Activated naive CD4-positive, alpha-beta T cell treated with anti-CD3 and anti-CD28 coated beads for 36 hours (primary cell): ENCODE measurements at regions of chrX and their contacts with region 1.

Region 1: DNA sequence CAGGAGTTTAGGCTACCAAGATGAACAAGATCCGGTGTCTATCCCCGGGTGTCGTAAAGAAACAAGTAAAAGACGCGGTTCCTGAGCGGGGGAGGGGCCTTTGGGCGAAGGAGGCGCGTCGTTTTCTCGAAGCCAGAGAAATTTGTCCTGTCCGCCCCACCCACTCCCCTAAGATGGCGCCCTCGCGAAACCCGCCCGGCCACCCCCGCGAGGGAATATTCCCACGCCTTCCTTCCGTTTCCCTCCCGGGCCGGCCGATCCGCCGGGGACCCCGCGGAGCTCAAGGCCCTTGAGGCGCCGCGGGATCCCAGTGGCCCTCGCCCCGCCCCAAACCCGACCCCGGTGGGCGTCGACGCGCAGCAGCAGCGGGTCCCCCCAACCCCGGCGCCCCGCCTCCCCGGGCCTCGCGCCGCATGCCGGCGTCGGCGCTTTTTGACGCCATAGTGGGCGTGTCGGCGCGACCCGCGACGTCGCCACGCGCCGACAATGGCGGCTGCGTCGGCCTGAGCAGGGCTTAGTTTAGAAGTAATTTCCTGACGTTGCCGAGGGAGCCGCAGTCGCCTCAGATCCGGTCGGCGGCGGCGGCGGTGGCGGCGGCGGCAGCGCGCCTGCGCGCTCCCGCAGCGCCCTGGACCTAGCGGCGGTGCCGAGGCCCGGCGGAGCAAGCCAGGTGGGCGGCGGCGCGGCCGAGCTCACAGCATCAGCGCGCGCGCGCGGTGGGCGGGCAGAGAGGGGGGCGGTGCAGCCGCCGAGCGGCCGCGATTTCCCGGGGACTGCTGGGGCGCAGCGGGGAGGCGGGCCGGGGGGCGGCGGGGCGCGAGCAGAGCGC is at the start of gene HTATSF1:
- DNase-seq: peak; percentile 93
- H3K4me3 Mint-ChIP-seq: peak within 1 kb of the TSS; percentile 90
- H3K27ac Mint-ChIP-seq: peak within 1 kb of the TSS; percentile 94
- H3K4me1 Mint-ChIP-seq: peaks cover 18% of the 10 kb centered on the region
- H3K27me3 Mint-ChIP-seq: no peaks in the 10 kb centered on the region
- total RNA-seq, gene HTATSF1: 38.9 to 40.4 TPM

Region 2: DNA sequence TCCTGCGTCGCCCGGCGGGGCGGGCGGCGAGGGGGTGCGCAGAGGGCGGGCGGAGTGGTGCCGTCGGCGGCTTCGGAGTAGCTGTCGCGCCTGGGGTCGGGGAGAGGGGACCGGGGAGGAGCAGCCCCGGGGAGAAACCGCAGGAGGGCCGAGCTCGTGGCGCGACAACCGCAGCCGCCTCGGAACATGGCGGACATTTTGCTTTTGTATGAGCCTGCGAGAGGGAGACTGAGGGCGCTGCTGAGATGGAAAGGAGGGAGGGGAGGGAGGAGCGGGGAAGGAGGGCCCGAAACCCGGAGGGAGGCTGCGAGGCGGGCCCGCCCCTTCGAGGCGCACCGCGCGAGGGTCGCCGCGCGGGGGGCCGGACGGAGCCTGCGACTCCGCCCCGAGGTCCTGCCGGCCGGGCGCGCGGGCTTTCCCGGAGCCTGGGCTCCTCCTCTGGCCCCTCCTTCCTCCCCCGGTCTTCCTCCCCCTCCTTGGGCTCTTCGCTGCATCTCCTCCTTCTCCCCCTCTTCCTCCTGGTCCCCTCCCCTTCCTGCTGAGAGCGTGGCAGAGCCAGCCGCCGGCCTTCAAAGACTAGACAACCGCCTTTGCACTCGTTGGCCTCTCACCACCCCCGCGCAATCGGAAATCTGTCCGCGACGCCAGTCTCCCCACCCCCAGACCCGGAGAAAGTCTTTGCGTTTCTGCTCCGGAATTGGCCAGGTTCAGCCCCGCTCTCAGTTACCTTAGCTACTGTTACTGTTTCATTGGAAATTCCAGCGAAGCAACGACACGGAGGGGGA is 975.4 kb before region 1 on chrX:
- CTCF ChIA-PET with region 1: no interaction called
- intact Hi-C with region 1: loop called (anchors 2 kb)
- DNase-seq: peak; percentile 91
- H3K4me3 Mint-ChIP-seq: peak overlapping the region; percentile 97
- H3K27ac Mint-ChIP-seq: peak overlapping the region; percentile 97
- H3K4me1 Mint-ChIP-seq: peaks cover 38% of the 10 kb centered on the region
- H3K27me3 Mint-ChIP-seq: no peaks in the 10 kb centered on the region

Region 3: GRCh38 chrX:136147315-136147901 is 349.6 kb before region 1 on chrX and contains the start of gene FHL1:
- CTCF ChIA-PET with region 1: no interaction called
- intact Hi-C with region 1: loop called (anchors 2 kb)
- DNase-seq: peak; percentile 54
- H3K4me3 Mint-ChIP-seq: peak within 1 kb of the TSS; percentile 74
- H3K27ac Mint-ChIP-seq: peak within 1 kb of the TSS; percentile 32
- H3K4me1 Mint-ChIP-seq: peaks cover 26% of the 10 kb centered on the region
- H3K27me3 Mint-ChIP-seq: no peaks in the 10 kb centered on the region
- total RNA-seq, gene FHL1: 17.7 to 20.5 TPM

Region 4: GRCh38 chrX:136450050-136450830 is 46.7 kb before region 1 on chrX:
- CTCF ChIA-PET with region 1: no interaction called
- intact Hi-C with region 1: no loop called
- DNase-seq: no peak
- H3K4me3 Mint-ChIP-seq: no peak overlapping the region
- H3K27ac Mint-ChIP-seq: no peak overlapping the region
- H3K4me1 Mint-ChIP-seq: no peaks in the 10 kb centered on the region
- H3K27me3 Mint-ChIP-seq: no peaks in the 10 kb centered on the region

Region 5: DNA sequence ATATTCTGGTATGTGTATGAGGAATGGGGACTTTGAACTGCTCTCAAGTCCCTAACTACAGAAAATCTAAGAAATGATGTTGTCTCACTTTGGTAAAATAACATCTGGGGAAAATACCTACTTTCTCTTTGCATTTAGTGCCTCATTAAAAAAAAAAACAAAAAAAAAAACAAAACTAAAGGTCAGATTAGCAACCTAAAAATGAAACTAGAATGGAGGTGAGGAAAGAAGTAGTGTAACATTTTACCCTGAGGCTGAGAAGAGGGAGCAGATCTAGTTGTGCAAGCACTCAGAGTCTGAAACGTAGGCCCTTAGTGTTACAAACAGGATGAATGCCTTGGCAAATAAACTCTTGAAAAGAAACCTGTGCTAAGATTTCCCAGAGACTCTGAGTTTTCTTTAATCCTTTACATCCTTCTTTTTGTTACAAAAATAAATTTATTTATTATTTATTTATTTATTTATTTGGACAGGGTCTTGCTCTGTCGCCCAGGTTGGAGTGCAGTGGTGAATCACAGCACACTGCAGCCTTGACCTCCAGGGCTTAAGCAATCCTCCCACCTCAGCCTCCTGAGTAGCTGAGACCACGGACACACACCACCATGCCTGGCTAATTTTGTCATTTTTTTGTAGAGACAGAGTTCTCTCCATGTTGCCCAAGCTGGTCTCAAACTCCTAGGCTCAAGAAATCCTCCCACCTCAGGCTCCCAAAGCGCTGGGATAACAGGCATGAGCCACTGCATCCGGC is 91.2 kb after region 1 on chrX:
- CTCF ChIA-PET with region 1: no interaction called
- intact Hi-C with region 1: loop called (anchors 2 kb)
- DNase-seq: peak; percentile 37
- H3K4me3 Mint-ChIP-seq: no peak overlapping the region
- H3K27ac Mint-ChIP-seq: peak overlapping the region; percentile 86
- H3K4me1 Mint-ChIP-seq: peaks cover 63% of the 10 kb centered on the region
- H3K27me3 Mint-ChIP-seq: no peaks in the 10 kb centered on the region

Region 6: GRCh38 chrX:136711147-136711546 is 214.2 kb after region 1 on chrX:
- CTCF ChIA-PET with region 1: no interaction called
- intact Hi-C with region 1: loop called (anchors 5 kb)
- DNase-seq: peak; percentile 56
- H3K4me3 Mint-ChIP-seq: no peak overlapping the region
- H3K27ac Mint-ChIP-seq: peak overlapping the region; percentile 95
- H3K4me1 Mint-ChIP-seq: peaks cover 74% of the 10 kb centered on the region
- H3K27me3 Mint-ChIP-seq: no peaks in the 10 kb centered on the region

Region 7: GRCh38 chrX:136909706-136910564 is 413.0 kb after region 1 on chrX:
- CTCF ChIA-PET with region 1: no interaction called
- intact Hi-C with region 1: loop called (anchors 1 kb)
- DNase-seq: peak; percentile 75
- H3K4me3 Mint-ChIP-seq: peak overlapping the region; percentile 89
- H3K27ac Mint-ChIP-seq: peak overlapping the region; percentile 87
- H3K4me1 Mint-ChIP-seq: peaks cover 15% of the 10 kb centered on the region
- H3K27me3 Mint-ChIP-seq: no peaks in the 10 kb centered on the region

Region 8: DNA sequence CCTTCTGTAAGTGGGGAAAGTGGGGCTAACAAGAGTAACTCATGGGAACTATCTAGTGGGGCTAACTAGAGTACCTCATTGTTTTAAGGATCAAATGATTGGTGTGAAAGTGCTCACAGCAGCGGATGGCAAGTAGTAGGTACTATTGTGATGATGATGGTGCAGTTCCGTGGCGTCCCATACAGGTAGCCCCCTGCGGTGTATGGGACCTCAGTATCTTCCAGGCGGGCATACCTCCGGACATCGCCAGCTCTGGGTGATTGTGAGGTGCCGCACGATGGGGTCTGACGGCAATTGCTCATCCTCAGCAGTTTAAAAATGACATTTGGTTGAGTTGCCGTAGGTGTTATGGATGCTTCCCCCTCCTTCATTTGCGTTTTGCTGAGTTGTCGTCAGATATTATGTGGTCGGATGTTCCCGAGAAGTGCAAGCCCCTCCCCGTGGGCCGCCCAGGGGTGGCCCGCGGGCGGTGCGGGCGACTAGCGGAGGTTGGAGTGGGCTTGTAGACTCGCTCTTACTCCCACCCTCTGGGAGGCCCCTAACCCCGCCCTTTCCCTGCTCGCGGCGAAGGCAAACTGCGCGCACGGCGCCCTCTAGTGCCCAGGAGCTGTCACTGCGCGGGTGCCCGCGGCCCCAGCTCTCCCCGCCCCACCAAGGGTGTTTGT is 555.1 kb after region 1 on chrX:
- CTCF ChIA-PET with region 1: no interaction called
- intact Hi-C with region 1: loop called (anchors 1 kb)
- DNase-seq: peak; percentile 82
- H3K4me3 Mint-ChIP-seq: peak overlapping the region; percentile 86
- H3K27ac Mint-ChIP-seq: peak overlapping the region; percentile 63
- H3K4me1 Mint-ChIP-seq: peaks cover 4% of the 10 kb centered on the region
- H3K27me3 Mint-ChIP-seq: peaks cover 20% of the 10 kb centered on the region